ENCODE measurements at regions of chr15 and their contacts with region 1.

Region 1: GRCh38 chr15:53759411-53759931 is at the start of gene WDR72:
- DNase-seq: no peak
- H3K4me3 ChIP-seq: no peak within 1 kb of the TSS
- H3K27ac ChIP-seq: no peak within 1 kb of the TSS
- H3K4me1 ChIP-seq: no peaks in the 10 kb centered on the region
- CTCF ChIP-seq: no peak
- total RNA-seq, gene WDR72: not detected in 2 replicates

Region 2: GRCh38 chr15:53611145-53611920 is 148.1 kb before region 1 on chr15:
- CTCF ChIA-PET with region 1: no interaction called
- POLR2A ChIA-PET with region 1: no interaction called
- intact Hi-C with region 1: no loop called
- DNase-seq: no peak
- H3K4me3 ChIP-seq: no peak overlapping the region
- H3K27ac ChIP-seq: no peak overlapping the region
- H3K4me1 ChIP-seq: no peaks in the 10 kb centered on the region
- CTCF ChIP-seq: no peak

Region 3: GRCh38 chr15:53625260-53625659 is 134.2 kb before region 1 on chr15:
- CTCF ChIA-PET with region 1: no interaction called
- POLR2A ChIA-PET with region 1: no interaction called
- intact Hi-C with region 1: no loop called
- DNase-seq: no peak
- H3K4me3 ChIP-seq: no peak overlapping the region
- H3K27ac ChIP-seq: no peak overlapping the region
- H3K4me1 ChIP-seq: no peaks in the 10 kb centered on the region
- CTCF ChIP-seq: no peak

Region 4: GRCh38 chr15:54304321-54304720 is 544.9 kb after region 1 on chr15:
- CTCF ChIA-PET with region 1: interaction called, 14 read pairs
- POLR2A ChIA-PET with region 1: no interaction called
- intact Hi-C with region 1: no loop called
- DNase-seq: no peak
- H3K4me3 ChIP-seq: no peak overlapping the region
- H3K27ac ChIP-seq: no peak overlapping the region
- H3K4me1 ChIP-seq: no peaks in the 10 kb centered on the region
- CTCF ChIP-seq: no peak